ENCODE measurements at regions of chr17 and their contacts with region 1.

Region 1: DNA sequence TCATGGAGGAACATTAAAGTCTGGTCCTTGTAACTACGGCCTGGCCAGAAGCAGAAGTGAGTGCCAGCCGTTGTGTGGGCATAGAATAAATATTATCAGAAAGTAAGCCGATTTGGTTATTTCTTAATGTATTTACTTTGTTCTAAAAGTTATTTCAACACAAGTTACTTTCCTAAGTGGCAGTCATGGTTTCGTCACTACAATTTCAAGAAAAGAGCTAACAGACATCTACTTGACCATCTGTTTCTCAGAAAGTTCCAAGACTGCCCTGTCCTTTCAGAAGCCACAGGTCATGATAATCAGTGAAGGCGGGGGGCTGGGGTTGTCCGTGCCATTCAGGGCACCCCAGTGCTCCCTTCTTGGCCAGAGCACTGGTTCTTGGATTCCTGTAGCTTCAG is 14.9 kb upstream of the FASN start:
- DNase-seq: no peak
- H3K4me3 ChIP-seq: no peak overlapping the region
- H3K27ac ChIP-seq: no peak overlapping the region
- H3K4me1 ChIP-seq: no peaks in the 10 kb centered on the region
- H3K27me3 ChIP-seq: no peaks in the 10 kb centered on the region
- CTCF ChIP-seq: no peak

Region 2: DNA sequence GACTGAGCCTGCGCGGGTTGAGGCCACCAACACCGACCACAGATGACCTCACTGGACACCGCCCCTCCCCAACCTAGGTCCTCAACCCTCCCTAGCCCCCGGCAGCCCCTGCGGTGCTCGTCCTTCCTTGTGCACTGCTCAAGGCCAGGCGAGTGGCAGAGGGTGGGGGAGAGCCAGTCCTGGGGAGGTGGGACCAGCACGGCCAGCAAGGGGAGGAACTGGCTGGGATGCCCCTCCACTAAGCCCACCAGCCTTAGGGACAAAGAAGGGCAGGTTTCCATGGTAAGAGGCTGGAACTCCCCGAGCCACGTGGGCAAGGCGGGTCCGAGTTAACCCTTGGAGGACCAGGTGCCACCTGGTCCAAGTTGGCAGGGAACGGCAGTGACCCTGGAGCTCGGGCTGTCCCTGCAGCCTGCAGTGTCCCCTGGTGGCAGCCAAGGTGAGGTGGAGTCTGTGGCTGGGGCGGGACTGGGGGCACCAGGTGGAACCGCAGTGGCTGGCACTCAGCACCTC is 575.5 kb before region 1 on chr17:
- CTCF ChIA-PET with region 1: no interaction called
- POLR2A ChIA-PET with region 1: interaction called, 14 read pairs
- intact Hi-C with region 1: no loop called
- DNase-seq: no peak
- H3K4me3 ChIP-seq: no peak overlapping the region
- H3K27ac ChIP-seq: no peak overlapping the region
- H3K4me1 ChIP-seq: no peaks in the 10 kb centered on the region
- H3K27me3 ChIP-seq: peaks cover 11% of the 10 kb centered on the region
- CTCF ChIP-seq: peak; percentile 50